Ascending aorta (tissue), 2 donors: ENCODE measurements at regions of chr6 and their contacts with region 1.

Region 1: GRCh38 chr6:36979347-36979742 is 6.7 kb downstream of the MTCH1 start:
- DNase-seq: no peak
- H3K4me3 ChIP-seq: no peak overlapping the region
- H3K27ac ChIP-seq: no peak overlapping the region
- H3K4me1 ChIP-seq: peaks cover 6 to 29% of the 10 kb centered on the region in 2 donors
- H3K27me3 ChIP-seq: no peaks in the 10 kb centered on the region
- CTCF ChIP-seq: peak; percentile 25 to 63 (median 51)

Region 2: GRCh38 chr6:36765594-36766398 is 213.5 kb before region 1 on chr6:
- intact Hi-C with region 1: loop called (anchors 5 kb)
- DNase-seq: peak; percentile 33 to 89
- H3K4me3 ChIP-seq: no peak overlapping the region
- H3K27ac ChIP-seq: no peak overlapping the region
- H3K4me1 ChIP-seq: peaks cover 0 to 8% of the 10 kb centered on the region in 2 donors
- H3K27me3 ChIP-seq: no peaks in the 10 kb centered on the region
- CTCF ChIP-seq: peak; percentile 63 to 85 (median 82)

Region 3: GRCh38 chr6:37406726-37407356 is 427.5 kb after region 1 on chr6:
- intact Hi-C with region 1: no loop called
- DNase-seq: no peak
- H3K4me3 ChIP-seq: no peak overlapping the region
- H3K27ac ChIP-seq: no peak overlapping the region
- H3K4me1 ChIP-seq: peaks cover 0 to 3% of the 10 kb centered on the region in 2 donors
- H3K27me3 ChIP-seq: no peaks in the 10 kb centered on the region
- CTCF ChIP-seq: no peak